CD8-positive, alpha-beta T cell (primary cell): ENCODE measurements at regions of chr10 and their contacts with region 1.

Region 1: GRCh38 chr10:99732033-99732912 is at the starts of genes COX15 and CUTC:
- DNase-seq: peak; percentile 89 to 98 (median 95)
- ATAC-seq: peak; percentile 89
- H3K4me3 ChIP-seq: peak within 1 kb of the TSS; percentile 85 to 96
- H3K4me3 Mint-ChIP-seq: peak within 1 kb of the TSS; percentile 100
- H3K27ac ChIP-seq: peak within 1 kb of the TSS; percentile 85 to 92
- H3K27ac Mint-ChIP-seq: peak within 1 kb of the TSS; percentile 99
- H3K4me1 ChIP-seq: peaks cover 38% of the 10 kb centered on the region
- H3K4me1 Mint-ChIP-seq: peaks cover 56% of the 10 kb centered on the region
- H3K27me3 ChIP-seq: no peaks in the 10 kb centered on the region
- H3K27me3 Mint-ChIP-seq: no peaks in the 10 kb centered on the region
- CTCF ChIP-seq: peak; percentile 55
- total RNA-seq, gene COX15: 6.8 to 8.1 TPM
- total RNA-seq, gene CUTC: 12.0 to 12.7 TPM

Region 2: GRCh38 chr10:98134431-98135221 is 1597.6 kb before region 1 on chr10 and contains the start of gene R3HCC1L:
- CTCF ChIA-PET with region 1: no interaction called
- POLR2A ChIA-PET with region 1: no interaction called
- intact Hi-C with region 1: loop called in 1 of 2 experiments (anchors 1 kb)
- DNase-seq: peak; percentile 87 to 96 (median 93)
- ATAC-seq: peak; percentile 95
- H3K4me3 ChIP-seq: peak within 1 kb of the TSS; percentile 85
- H3K4me3 Mint-ChIP-seq: peak within 1 kb of the TSS; percentile 92
- H3K27ac ChIP-seq: peak within 1 kb of the TSS; percentile 91 to 93
- H3K27ac Mint-ChIP-seq: peak within 1 kb of the TSS; percentile 97
- H3K4me1 ChIP-seq: peaks cover 23% of the 10 kb centered on the region
- H3K4me1 Mint-ChIP-seq: peaks cover 48% of the 10 kb centered on the region
- H3K27me3 ChIP-seq: no peaks in the 10 kb centered on the region
- H3K27me3 Mint-ChIP-seq: no peaks in the 10 kb centered on the region
- CTCF ChIP-seq: no peak
- total RNA-seq, gene R3HCC1L: 13.6 to 13.7 TPM

Region 3: GRCh38 chr10:99141022-99141422 is 591.3 kb before region 1 on chr10:
- CTCF ChIA-PET with region 1: no interaction called
- POLR2A ChIA-PET with region 1: no interaction called
- intact Hi-C with region 1: no loop called
- DNase-seq: no peak
- ATAC-seq: no peak
- H3K4me3 ChIP-seq: no peak overlapping the region
- H3K4me3 Mint-ChIP-seq: no peak overlapping the region
- H3K27ac ChIP-seq: no peak overlapping the region
- H3K27ac Mint-ChIP-seq: no peak overlapping the region
- H3K4me1 ChIP-seq: no peaks in the 10 kb centered on the region
- H3K4me1 Mint-ChIP-seq: no peaks in the 10 kb centered on the region
- H3K27me3 ChIP-seq: no peaks in the 10 kb centered on the region
- H3K27me3 Mint-ChIP-seq: no peaks in the 10 kb centered on the region
- CTCF ChIP-seq: no peak

Region 4: GRCh38 chr10:99430451-99431189 is 301.7 kb before region 1 on chr10 and contains the start of gene GOT1:
- CTCF ChIA-PET with region 1: no interaction called
- POLR2A ChIA-PET with region 1: no interaction called
- intact Hi-C with region 1: loop called (anchors 1 to 2 kb)
- DNase-seq: peak; percentile 83 to 98 (median 89)
- ATAC-seq: peak; percentile 92
- H3K4me3 ChIP-seq: peak within 1 kb of the TSS; percentile 81 to 96
- H3K4me3 Mint-ChIP-seq: peak within 1 kb of the TSS; percentile 98
- H3K27ac ChIP-seq: peak within 1 kb of the TSS; percentile 66 to 81
- H3K27ac Mint-ChIP-seq: peak within 1 kb of the TSS; percentile 96
- H3K4me1 ChIP-seq: peaks cover 21% of the 10 kb centered on the region
- H3K4me1 Mint-ChIP-seq: peaks cover 40% of the 10 kb centered on the region
- H3K27me3 ChIP-seq: no peaks in the 10 kb centered on the region
- H3K27me3 Mint-ChIP-seq: no peaks in the 10 kb centered on the region
- CTCF ChIP-seq: no peak
- total RNA-seq, gene GOT1: 7.2 to 8.6 TPM

Region 5: GRCh38 chr10:99620713-99621453 is 111.4 kb before region 1 on chr10:
- CTCF ChIA-PET with region 1: no interaction called
- POLR2A ChIA-PET with region 1: interaction called, 10 read pairs
- intact Hi-C with region 1: loop called (anchors 1 kb)
- DNase-seq: peak; percentile 79 to 91 (median 86)
- ATAC-seq: peak; percentile 83
- H3K4me3 ChIP-seq: peak overlapping the region; percentile 76 to 78
- H3K4me3 Mint-ChIP-seq: peak overlapping the region; percentile 85
- H3K27ac ChIP-seq: peak overlapping the region; percentile 96 to 97
- H3K27ac Mint-ChIP-seq: peak overlapping the region; percentile 97
- H3K4me1 ChIP-seq: peaks cover 27% of the 10 kb centered on the region
- H3K4me1 Mint-ChIP-seq: peaks cover 45% of the 10 kb centered on the region
- H3K27me3 ChIP-seq: no peaks in the 10 kb centered on the region
- H3K27me3 Mint-ChIP-seq: no peaks in the 10 kb centered on the region
- CTCF ChIP-seq: no peak

Region 6: DNA sequence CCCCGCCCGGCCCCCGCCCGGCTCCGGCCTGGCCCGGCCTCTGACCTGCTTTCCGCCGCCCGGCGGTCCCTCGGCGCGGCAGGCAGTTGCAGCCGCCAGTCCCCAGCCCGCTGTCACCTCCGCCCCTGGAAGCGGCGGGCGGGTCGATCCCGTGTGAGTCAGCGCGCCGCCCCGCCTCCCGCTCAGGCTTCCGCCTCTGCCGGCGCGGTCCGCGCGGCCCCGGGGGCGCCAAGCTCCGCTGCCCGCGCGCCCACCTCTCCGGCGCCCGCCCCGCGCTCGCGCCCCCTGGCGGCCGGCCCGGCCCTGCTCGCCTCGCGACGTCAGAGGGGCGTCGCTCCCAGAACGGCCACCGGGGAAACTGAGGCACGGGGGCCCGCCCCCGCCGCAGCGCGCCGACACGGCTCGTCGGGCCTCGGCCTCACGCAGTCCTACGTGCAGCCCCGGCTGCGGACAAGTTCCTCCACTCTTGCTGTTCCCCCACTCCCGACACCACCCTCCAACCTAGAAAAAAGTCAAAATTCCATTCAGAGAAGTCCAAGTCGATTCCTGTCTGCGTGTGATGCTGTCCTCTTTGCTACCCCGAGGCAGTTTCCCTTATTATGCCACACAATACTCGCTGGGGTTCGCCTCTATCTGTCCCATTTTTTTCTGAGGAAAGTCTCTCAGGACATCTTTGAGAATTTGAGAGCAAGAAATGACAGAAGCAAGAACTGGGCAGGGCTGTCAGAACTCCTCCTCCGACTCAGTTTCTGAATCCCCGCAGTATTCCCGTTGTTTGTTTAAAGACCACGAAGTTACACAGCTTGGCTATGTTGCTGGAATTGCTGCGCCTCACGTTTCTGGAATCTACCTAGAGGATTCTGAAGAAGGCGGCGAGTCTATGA is 277.8 kb after region 1 on chr10 and contains the start of gene DNMBP:
- CTCF ChIA-PET with region 1: interaction called, 5 read pairs
- POLR2A ChIA-PET with region 1: no interaction called
- intact Hi-C with region 1: loop called (anchors 1 to 2 kb)
- DNase-seq: peak; percentile 65 to 93 (median 83)
- ATAC-seq: peak; percentile 95
- H3K4me3 ChIP-seq: peak within 1 kb of the TSS; percentile 68 to 76
- H3K4me3 Mint-ChIP-seq: peak within 1 kb of the TSS; percentile 91
- H3K27ac ChIP-seq: peak within 1 kb of the TSS; percentile 36 to 40
- H3K27ac Mint-ChIP-seq: peak within 1 kb of the TSS; percentile 86
- H3K4me1 ChIP-seq: peaks cover 17% of the 10 kb centered on the region
- H3K4me1 Mint-ChIP-seq: peaks cover 44% of the 10 kb centered on the region
- H3K27me3 ChIP-seq: no peaks in the 10 kb centered on the region
- H3K27me3 Mint-ChIP-seq: no peaks in the 10 kb centered on the region
- CTCF ChIP-seq: peak; percentile 47
- total RNA-seq, gene DNMBP: 4.0 to 4.1 TPM

Region 7: DNA sequence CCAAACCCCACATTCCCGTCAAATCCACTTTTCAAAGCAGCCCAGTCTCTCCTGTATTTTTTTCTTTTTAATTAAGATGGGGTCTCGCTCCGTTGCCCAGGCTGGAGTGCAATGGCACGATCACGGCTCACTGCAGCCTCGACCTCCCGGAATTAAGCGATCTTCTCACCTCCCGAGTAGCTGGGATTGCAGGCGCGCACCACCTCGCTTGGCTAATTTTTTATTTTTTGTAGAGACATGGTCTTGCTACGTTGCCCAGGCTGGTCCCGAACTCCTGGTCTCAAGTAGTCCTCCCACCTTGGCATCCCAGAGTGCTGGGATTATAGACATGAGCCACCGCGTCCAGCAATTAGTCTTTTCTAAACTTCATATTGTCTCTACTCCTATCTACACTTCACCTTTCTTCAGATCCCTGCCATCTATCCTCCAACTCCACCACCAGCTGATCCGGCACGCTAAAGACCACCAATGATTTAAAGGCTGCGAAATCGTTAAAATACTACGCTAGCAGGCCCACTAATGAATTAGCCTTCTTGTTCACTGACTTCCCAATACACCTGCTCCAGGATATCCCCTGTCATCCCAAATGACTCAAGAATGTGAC is 497.6 kb after region 1 on chr10:
- CTCF ChIA-PET with region 1: no interaction called
- POLR2A ChIA-PET with region 1: no interaction called
- intact Hi-C with region 1: loop called in 1 of 2 experiments (anchors 10 kb)
- DNase-seq: peak in 1 of 9 experiments; percentile 9
- ATAC-seq: no peak
- H3K4me3 ChIP-seq: peak overlapping the region; percentile 66 to 99
- H3K4me3 Mint-ChIP-seq: peak overlapping the region; percentile 93
- H3K27ac ChIP-seq: peak overlapping the region; percentile 83 to 89
- H3K27ac Mint-ChIP-seq: peak overlapping the region; percentile 95
- H3K4me1 ChIP-seq: peaks cover 21% of the 10 kb centered on the region
- H3K4me1 Mint-ChIP-seq: peaks cover 32% of the 10 kb centered on the region
- H3K27me3 ChIP-seq: no peaks in the 10 kb centered on the region
- H3K27me3 Mint-ChIP-seq: no peaks in the 10 kb centered on the region
- CTCF ChIP-seq: no peak

Region 8: DNA sequence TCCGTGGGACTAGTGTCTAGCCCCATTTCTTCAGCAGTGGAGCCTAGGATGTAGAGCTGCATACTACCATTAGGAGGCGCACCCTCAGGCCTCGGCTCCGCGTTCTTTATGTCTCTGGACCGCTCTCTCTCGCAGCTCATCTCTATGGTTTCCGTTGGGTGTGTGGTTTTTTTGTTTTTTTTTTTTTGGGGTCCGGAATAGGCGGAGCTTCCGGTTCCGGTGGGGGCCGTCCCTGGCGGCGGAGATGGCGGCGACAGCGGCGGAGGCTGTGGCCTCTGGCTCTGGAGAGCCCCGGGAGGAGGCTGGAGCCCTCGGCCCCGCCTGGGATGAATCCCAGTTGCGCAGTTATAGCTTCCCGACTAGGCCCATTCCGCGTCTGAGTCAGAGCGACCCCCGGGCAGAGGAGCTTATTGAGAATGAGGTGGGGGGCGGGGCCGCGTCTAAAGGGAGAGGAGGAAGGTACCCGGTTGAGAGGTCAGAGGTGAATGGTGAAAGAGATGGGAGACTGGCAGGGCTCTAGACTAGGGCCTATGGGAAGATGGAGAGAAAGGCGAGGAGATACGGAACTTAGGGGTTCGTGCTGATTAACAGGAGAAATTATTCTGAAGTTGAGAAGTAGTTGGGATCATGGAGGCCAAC is 803.6 kb after region 1 on chr10 and contains the start of gene HIF1AN:
- CTCF ChIA-PET with region 1: no interaction called
- POLR2A ChIA-PET with region 1: no interaction called
- intact Hi-C with region 1: loop called in 1 of 2 experiments (anchors 5 kb)
- DNase-seq: peak; percentile 73 to 97 (median 88)
- ATAC-seq: peak; percentile 99
- H3K4me3 ChIP-seq: peak within 1 kb of the TSS; percentile 59 to 82
- H3K4me3 Mint-ChIP-seq: no peak within 1 kb of the TSS
- H3K27ac ChIP-seq: peak within 1 kb of the TSS; percentile 55 to 75
- H3K27ac Mint-ChIP-seq: no peak within 1 kb of the TSS
- H3K4me1 ChIP-seq: peaks cover 29% of the 10 kb centered on the region
- H3K4me1 Mint-ChIP-seq: peaks cover 19% of the 10 kb centered on the region
- H3K27me3 ChIP-seq: no peaks in the 10 kb centered on the region
- H3K27me3 Mint-ChIP-seq: no peaks in the 10 kb centered on the region
- CTCF ChIP-seq: peak; percentile 92
- total RNA-seq, gene HIF1AN: 28.0 to 31.2 TPM